Endothelial cell of umbilical vein (primary cell): ENCODE measurements at regions of chr18 and their contacts with region 1.

Region 1: DNA sequence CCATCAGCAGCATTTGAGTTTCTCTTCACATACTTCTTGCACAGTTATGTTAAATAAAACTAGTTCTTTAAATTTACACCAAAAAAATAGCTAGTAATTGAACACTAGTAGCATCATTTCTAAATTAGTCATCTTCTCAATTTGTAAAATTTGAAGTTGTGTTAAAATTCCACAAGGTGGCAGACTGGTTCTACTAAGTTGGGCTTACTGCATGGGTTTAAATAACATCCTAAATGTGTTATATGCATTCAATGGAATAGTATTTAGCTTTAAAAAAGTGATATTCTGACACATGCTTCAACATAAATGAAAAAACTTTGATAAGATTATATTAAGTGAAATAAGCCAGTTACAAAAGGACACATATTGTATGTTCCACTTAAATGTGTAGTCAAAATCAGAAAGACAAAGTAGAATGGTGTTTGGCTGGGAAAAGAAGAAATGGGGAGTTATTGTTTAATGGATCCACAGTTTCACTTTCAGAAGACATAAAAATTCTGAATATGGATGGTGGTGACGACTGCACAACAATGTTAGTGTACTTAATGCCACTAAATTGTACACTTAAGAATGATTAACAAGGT is 28.7 kb upstream of the RPRD1A start:
- DNase-seq: peak; percentile 55
- H3K4me3 ChIP-seq: no peak overlapping the region
- H3K27ac ChIP-seq: no peak overlapping the region
- H3K4me1 ChIP-seq: no peaks in the 10 kb centered on the region
- H3K27me3 ChIP-seq: peaks cover 17 to 18% of the 10 kb centered on the region in 2 experiments
- CTCF ChIP-seq: peak; percentile 19 to 29
- POLR2A ChIP-seq: no peak

Region 2: DNA sequence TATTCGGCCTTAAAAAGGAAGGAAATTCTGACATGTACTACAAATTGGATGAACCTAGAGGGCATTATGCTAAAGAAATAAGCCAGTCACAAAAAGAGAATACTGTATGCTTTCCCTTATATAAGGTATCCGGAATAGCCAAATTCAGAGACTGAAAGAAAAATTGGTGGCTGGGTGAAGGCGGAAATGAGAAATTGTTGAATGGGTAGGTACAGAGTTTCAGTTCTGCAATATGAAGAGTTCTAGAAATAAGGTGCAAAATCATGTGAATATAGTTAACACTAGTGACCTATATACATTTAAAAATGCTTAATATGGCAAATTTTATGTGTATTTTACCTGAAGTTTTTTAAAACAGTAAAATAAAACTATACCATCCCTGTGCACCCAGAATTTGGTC is 80.4 kb before region 1 on chr18:
- CTCF ChIA-PET with region 1: interaction called, 77 read pairs
- POLR2A ChIA-PET with region 1: no interaction called
- dilution Hi-C with region 1: no loop called
- intact Hi-C with region 1: loop called (anchors 1 kb)
- DNase-seq: no peak
- H3K4me3 ChIP-seq: no peak overlapping the region
- H3K27ac ChIP-seq: no peak overlapping the region
- H3K4me1 ChIP-seq: no peaks in the 10 kb centered on the region
- H3K27me3 ChIP-seq: no peaks in the 10 kb centered on the region
- CTCF ChIP-seq: no peak
- POLR2A ChIP-seq: no peak

Region 3: DNA sequence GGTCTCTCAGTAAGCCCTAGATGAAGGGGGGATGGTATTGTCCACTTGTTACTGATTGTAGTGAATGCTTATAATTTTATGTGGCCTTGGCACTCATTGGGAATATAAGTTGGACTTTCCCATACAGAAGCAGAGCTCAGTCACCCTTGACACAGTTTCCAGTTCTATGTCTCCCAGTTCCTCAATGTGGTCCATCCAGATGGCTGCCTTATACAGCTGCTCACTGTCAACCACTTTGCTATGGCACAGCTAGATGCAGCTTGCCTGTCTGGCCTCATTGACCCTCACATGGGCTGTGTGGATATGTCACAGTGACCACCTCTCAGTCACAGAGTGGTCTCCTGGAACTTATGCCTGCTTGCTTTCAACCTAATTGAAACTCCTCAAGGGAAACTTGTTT is 11.4 kb after region 1 on chr18:
- CTCF ChIA-PET with region 1: interaction called, 12 read pairs
- POLR2A ChIA-PET with region 1: no interaction called
- dilution Hi-C with region 1: no loop called
- intact Hi-C with region 1: no loop called
- DNase-seq: no peak
- H3K4me3 ChIP-seq: no peak overlapping the region
- H3K27ac ChIP-seq: no peak overlapping the region
- H3K4me1 ChIP-seq: no peaks in the 10 kb centered on the region
- H3K27me3 ChIP-seq: peaks cover 0 to 4% of the 10 kb centered on the region in 2 experiments
- CTCF ChIP-seq: no peak
- POLR2A ChIP-seq: no peak

Region 4: DNA sequence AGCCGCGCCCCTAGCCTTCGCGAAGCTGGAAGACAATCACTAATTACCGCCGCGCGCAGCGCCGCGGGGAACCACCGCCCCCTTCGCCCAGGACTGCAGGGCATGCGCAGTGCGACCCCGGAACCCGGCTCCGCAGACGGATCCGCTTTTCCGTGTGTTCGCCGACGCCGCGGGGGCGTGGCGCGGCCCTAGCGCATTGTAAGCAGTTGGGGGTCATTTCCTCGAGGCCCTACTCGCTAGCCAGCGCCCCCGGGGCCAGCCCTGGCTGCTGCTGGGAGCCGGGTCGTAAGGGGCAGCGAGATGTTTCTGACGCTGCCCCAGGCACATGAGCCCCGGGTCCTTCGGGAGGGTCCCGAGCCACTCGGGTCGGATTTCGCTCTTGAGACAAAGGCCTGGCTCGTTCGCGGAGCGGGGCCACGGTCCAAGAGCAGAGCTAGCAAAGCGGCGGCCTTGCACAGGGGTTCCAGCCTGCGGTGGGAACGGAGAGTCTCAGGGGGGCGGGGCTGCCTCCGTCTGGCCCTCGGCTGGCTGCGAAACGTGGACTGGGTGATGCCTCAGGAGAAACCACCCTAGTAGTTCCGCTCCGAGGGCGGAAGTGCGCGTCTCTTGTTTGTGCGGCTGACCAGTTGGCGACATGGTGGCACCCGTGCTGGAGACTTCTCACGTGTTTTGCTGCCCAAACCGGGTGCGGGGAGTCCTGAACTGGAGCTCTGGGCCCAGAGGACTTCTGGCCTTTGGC is 33.4 kb after region 1 on chr18 and contains the starts of genes ELP2 and SLC39A6:
- CTCF ChIA-PET with region 1: interaction called, 9 read pairs
- POLR2A ChIA-PET with region 1: no interaction called
- dilution Hi-C with region 1: no loop called
- intact Hi-C with region 1: loop called (anchors 1 kb)
- DNase-seq: peak; percentile 98
- H3K4me3 ChIP-seq: peak within 1 kb of the TSS; percentile 64 to 96 (median 94)
- H3K27ac ChIP-seq: peak within 1 kb of the TSS; percentile 98
- H3K4me1 ChIP-seq: peaks cover 15% of the 10 kb centered on the region
- H3K27me3 ChIP-seq: no peaks in the 10 kb centered on the region
- CTCF ChIP-seq: no peak
- POLR2A ChIP-seq: peak; percentile 67
- total RNA-seq, gene ELP2: 74.8 and 90.5 TPM in 2 replicates
- total RNA-seq, gene SLC39A6: 13.2 and 13.8 TPM in 2 replicates

Region 5: DNA sequence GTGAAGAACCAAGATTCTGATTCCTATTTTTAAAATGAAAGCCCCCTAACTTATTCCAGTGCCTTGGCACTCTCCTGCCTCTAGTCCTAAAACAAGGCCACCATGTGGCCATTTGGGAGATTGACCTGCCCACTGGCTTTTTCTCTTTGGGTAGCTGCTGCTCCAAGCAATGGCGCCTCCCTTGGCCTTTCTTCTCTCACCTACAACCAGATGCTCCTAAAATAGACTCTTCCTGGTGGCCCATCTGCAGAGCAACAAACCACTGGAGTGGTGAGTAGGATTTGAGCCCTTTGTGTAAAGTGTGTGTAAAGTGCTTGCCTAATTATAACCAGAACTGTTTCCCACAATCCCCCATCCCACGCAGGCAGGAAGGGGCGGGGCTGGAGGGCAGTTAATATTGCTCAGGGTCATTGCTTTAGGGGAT is 315.7 kb after region 1 on chr18:
- CTCF ChIA-PET with region 1: interaction called, 27 read pairs
- POLR2A ChIA-PET with region 1: no interaction called
- dilution Hi-C with region 1: no loop called
- intact Hi-C with region 1: loop called (anchors 1 kb)
- DNase-seq: no peak
- H3K4me3 ChIP-seq: no peak overlapping the region
- H3K27ac ChIP-seq: no peak overlapping the region
- H3K4me1 ChIP-seq: no peaks in the 10 kb centered on the region
- H3K27me3 ChIP-seq: no peaks in the 10 kb centered on the region
- CTCF ChIP-seq: peak; percentile 13 to 24
- POLR2A ChIP-seq: no peak

Region 6: DNA sequence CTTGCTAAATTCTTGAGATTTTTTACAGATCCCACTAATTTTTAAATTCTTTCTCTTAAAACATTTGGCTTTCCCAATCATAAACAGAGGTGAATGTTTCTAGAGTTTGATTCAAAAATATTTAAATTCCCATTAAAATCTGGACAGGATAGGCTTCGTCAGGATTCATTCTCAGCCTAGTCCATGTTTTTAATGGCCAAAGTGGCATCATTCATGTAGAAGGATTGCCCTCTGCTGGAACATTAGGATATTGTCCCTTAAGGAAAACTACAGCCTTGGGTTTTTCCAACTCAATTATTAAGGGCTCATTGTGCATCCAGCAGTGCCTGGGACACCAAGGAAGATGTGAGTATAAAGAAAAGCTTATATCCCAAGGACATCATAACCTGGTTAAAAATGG is 661.1 kb after region 1 on chr18:
- CTCF ChIA-PET with region 1: no interaction called
- POLR2A ChIA-PET with region 1: no interaction called
- dilution Hi-C with region 1: no loop called
- intact Hi-C with region 1: loop called (anchors 1 kb)
- DNase-seq: peak; percentile 50
- H3K4me3 ChIP-seq: no peak overlapping the region
- H3K27ac ChIP-seq: no peak overlapping the region
- H3K4me1 ChIP-seq: no peaks in the 10 kb centered on the region
- H3K27me3 ChIP-seq: no peaks in the 10 kb centered on the region
- CTCF ChIP-seq: peak; percentile 40 to 54
- POLR2A ChIP-seq: no peak

Region 7: GRCh38 chr18:37335409-37335736 is 1239.3 kb after region 1 on chr18:
- CTCF ChIA-PET with region 1: no interaction called
- POLR2A ChIA-PET with region 1: no interaction called
- dilution Hi-C with region 1: no loop called
- intact Hi-C with region 1: no loop called
- DNase-seq: no peak
- H3K4me3 ChIP-seq: no peak overlapping the region
- H3K27ac ChIP-seq: no peak overlapping the region
- H3K4me1 ChIP-seq: no peaks in the 10 kb centered on the region
- H3K27me3 ChIP-seq: no peaks in the 10 kb centered on the region
- CTCF ChIP-seq: peak in 1 of 2 donors; percentile 34
- POLR2A ChIP-seq: no peak